ENCODE measurements at regions of chr10 and their contacts with region 1.

Region 1: GRCh38 chr10:30534465-30535144 is 94.9 kb downstream of the LYZL2 start:
- DNase-seq: peak; percentile 82
- ATAC-seq: peak; percentile 49
- H3K4me3 Mint-ChIP-seq: no peak overlapping the region
- H3K27ac Mint-ChIP-seq: no peak overlapping the region
- H3K4me1 Mint-ChIP-seq: peaks cover 16% of the 10 kb centered on the region
- H3K27me3 Mint-ChIP-seq: no peaks in the 10 kb centered on the region

Region 2: DNA sequence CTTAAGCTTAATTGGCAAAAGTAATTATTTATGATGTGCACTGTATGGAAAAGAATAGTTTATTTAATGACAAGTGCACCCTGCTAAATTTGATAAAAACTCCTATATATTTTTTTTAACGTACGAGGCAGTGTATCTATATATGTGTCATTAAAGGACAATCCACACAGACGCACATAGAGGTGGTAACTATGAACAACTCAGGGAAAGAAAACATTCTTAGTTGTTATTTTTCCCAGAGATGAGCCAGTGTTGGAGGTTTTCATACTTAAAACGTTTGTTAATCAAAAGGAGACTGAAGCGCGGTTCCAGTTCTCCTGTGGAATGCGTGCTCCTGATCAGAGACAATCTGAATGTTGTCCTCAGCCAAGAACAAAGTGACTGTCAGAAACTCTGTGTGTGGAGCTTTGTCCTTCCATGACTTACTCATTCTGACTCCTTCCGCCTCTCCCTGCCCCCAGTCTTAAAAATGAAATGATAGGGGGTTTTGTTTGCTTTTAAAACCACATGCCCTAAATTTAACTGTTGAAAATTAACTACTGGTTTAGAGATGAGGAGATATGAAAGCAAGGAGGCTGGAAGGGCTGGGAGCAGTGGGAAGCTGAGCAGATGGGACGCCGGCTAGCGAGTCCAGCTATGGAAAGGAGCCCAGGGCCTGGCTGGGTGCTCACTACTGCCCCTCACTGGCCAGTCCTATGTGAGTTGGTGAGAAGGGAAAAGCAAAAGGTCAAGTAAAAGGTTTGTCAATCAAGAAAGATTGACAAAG is 999.4 kb before region 1 on chr10:
- CTCF ChIA-PET with region 1: no interaction called
- POLR2A ChIA-PET with region 1: no interaction called
- intact Hi-C with region 1: no loop called
- DNase-seq: peak; percentile 22
- ATAC-seq: peak; percentile 26
- H3K4me3 Mint-ChIP-seq: no peak overlapping the region
- H3K27ac Mint-ChIP-seq: no peak overlapping the region
- H3K4me1 Mint-ChIP-seq: peaks cover 5% of the 10 kb centered on the region
- H3K27me3 Mint-ChIP-seq: no peaks in the 10 kb centered on the region

Region 3: DNA sequence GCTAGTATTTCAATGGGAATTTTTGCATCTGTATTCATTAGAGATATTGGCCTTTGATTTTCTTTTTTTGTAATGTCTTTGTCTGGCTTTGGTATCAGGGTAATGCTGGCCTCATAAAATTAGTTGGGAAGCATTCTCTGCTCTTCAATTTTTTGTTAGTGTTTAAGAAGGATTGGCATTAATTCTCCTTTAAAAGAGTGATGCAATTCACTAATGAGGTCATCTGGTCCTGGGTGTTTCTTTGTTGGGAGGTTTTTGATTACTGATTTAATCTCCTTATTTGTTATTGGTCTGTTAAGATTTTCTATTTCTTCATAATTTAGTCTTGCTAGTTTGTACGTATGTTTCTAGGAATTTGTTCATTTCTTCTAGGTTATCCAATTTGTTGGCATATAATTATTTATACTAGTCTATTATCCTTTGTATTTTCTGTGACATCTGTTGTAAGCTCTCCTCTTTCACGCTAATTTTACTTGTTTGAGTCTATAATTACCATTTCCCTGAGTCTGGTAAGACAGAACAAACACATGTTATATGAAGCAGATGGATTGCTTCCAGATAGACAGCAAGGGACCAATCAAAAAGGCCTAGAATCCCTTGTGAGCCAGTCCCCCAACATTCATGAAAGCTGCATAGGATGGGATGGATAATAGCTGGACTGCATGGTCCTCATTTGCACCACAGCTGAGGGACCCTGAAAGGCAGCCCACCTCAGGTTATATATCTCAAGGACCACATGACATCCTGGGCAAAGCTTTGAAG is 239.9 kb before region 1 on chr10:
- CTCF ChIA-PET with region 1: no interaction called
- POLR2A ChIA-PET with region 1: no interaction called
- intact Hi-C with region 1: no loop called
- DNase-seq: no peak
- ATAC-seq: no peak
- H3K4me3 Mint-ChIP-seq: no peak overlapping the region
- H3K27ac Mint-ChIP-seq: no peak overlapping the region
- H3K4me1 Mint-ChIP-seq: no peaks in the 10 kb centered on the region
- H3K27me3 Mint-ChIP-seq: peaks cover 2% of the 10 kb centered on the region

Region 4: DNA sequence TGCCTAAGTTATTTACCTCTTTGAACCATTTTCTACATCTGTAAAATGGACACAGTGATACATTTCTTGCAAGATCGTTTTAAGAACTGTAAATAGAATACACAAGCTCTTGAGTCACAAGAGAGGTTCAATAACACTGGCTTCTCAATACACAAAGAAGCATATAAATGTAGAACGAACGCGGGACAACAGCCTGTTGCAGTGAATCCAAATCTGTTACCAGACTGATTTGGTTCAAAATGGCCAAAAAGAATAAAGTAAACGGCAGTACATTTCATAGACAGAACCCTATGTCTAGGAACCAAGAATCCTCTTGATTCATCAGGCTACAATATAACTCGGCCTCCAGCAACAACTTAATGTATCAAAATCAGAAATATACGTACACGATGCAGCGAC is 186.2 kb before region 1 on chr10:
- CTCF ChIA-PET with region 1: interaction called, 4 read pairs
- POLR2A ChIA-PET with region 1: interaction called, 3 read pairs
- intact Hi-C with region 1: loop called in 1 of 2 experiments (anchors 5 kb)
- DNase-seq: no peak
- ATAC-seq: peak; percentile 28
- H3K4me3 Mint-ChIP-seq: peak overlapping the region; percentile 91
- H3K27ac Mint-ChIP-seq: peak overlapping the region; percentile 98
- H3K4me1 Mint-ChIP-seq: peaks cover 38% of the 10 kb centered on the region
- H3K27me3 Mint-ChIP-seq: no peaks in the 10 kb centered on the region

Region 5: DNA sequence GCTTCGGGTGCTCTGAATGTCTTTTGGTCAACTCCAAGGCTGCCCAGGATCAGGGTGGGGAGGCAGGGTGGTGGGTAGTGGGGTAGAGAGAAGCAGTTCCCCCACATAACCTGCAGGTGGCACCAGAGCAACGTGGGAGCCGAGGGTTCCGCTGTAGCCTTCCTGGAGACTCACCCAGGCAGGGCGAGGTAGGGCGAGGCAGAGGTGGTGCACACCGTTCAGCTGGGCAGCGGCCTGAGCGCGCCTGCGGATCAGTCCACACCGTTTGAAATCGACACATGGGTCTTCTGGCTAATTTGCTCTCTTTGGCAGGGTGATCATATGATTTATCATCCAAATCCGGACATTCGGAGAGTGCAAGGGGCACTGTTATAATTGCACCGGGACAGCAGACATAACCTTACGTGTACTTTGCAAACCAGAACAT is 142.0 kb before region 1 on chr10:
- CTCF ChIA-PET with region 1: interaction called, 31 read pairs
- POLR2A ChIA-PET with region 1: no interaction called
- intact Hi-C with region 1: loop called (anchors 1 kb)
- DNase-seq: peak; percentile 87
- ATAC-seq: peak; percentile 100
- H3K4me3 Mint-ChIP-seq: no peak overlapping the region
- H3K27ac Mint-ChIP-seq: no peak overlapping the region
- H3K4me1 Mint-ChIP-seq: peaks cover 3% of the 10 kb centered on the region
- H3K27me3 Mint-ChIP-seq: peaks cover 19% of the 10 kb centered on the region

Region 6: DNA sequence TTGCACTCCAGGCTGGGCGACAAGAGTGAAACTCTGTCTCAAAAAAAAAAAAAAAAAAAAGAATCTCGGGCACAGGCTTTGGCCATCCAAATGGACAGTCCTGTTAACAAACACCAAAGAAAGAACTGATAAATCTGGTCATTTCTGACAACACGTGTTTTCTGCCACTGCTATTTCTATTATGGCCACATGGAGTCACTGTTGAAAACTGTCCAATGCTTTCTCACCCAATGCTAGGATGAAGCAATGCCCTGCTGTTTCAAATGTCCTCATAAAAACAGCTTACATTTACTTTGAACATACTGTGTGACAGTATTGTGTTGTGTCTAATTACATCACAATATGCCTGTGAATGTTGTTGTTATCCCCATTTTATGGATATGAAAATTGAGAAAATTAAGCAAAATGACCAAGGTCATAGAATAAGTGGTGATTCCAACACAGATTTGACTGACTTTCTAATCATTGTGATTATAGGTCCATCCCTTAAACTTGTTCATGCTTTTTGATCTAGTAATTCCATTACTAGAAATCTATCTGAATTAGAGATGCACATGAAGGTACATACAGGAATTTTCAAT is 120.5 kb before region 1 on chr10:
- CTCF ChIA-PET with region 1: interaction called, 15 read pairs
- POLR2A ChIA-PET with region 1: no interaction called
- intact Hi-C with region 1: loop called (anchors 1 kb)
- DNase-seq: no peak
- ATAC-seq: peak; percentile 39
- H3K4me3 Mint-ChIP-seq: no peak overlapping the region
- H3K27ac Mint-ChIP-seq: no peak overlapping the region
- H3K4me1 Mint-ChIP-seq: peaks cover 18% of the 10 kb centered on the region
- H3K27me3 Mint-ChIP-seq: no peaks in the 10 kb centered on the region

Region 7: DNA sequence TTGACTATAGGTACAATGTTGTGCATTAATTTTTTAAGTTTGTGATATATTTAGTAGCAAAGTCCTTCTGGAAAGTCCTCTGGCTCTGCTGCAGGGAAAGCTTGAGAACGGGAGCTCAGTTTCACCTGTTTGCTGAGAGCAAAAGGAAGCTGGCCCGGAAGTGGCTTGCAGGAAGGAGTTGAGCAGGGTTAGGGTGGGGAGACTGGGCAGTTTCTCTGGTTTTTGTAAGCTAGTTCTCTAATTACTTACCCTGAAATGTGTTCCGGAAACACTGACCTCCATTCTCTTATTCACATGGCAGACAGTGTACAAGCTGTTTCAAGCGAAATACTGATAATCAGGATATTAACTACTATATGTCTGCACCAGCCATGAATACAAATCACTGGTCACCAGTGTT is 78.3 kb before region 1 on chr10:
- CTCF ChIA-PET with region 1: no interaction called
- POLR2A ChIA-PET with region 1: no interaction called
- intact Hi-C with region 1: loop called in 1 of 2 experiments (anchors 5 kb)
- DNase-seq: peak; percentile 31
- ATAC-seq: peak; percentile 36
- H3K4me3 Mint-ChIP-seq: no peak overlapping the region
- H3K27ac Mint-ChIP-seq: no peak overlapping the region
- H3K4me1 Mint-ChIP-seq: peaks cover 22% of the 10 kb centered on the region
- H3K27me3 Mint-ChIP-seq: no peaks in the 10 kb centered on the region

Measured in activated CD4-positive, alpha-beta T cell treated with anti-CD3 and anti-CD28 coated beads for 36 hours (primary cell).